Activated CD4-positive, alpha-beta memory T cell treated with anti-CD3 and anti-CD28 coated beads for 36 hours (primary cell): ENCODE measurements at regions of chr3 and their contacts with region 1.

Region 1: DNA sequence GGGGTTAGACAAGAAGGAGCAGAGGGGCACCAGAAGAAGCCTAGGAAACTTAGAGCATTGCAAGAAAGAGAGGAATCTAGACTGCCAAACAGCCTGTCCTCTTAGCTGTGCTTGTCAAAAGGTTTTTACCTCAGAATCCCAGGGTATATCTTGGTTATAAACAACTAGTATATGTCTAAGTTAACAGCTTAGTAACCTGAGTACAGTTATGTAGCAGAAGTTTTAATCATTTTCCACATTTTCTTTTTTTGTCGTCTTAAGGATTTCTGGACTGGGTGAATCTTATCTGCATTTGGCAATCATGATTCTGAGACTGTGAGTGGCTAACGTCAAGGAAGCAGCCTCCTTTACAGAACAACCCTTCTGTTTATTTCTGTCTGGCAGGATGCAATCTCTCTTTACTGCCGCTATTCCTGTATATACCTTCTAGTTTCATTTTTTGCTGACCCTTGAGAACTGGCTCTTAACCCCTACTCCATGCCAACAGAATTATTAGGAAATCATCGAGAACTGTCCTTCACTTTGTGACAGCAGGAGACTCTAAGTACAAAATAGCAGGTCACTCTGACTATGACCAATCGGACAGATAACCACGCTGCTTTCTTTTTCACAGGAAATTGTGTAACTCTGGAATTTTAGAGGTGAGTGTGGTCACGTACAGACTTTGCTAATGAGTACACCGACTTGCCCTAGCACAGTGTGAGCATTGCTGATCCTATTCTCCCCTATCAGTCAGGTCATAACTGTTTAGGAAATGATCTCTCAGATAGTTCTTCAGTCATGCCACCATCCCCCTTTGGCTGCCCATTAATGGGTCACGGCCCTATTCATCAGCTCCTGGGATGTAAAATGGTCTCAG is 3.3 kb upstream of the CP start:
- DNase-seq: peak; percentile 46
- H3K4me3 Mint-ChIP-seq: peak overlapping the region; percentile 64
- H3K27ac Mint-ChIP-seq: peak overlapping the region; percentile 48
- H3K4me1 Mint-ChIP-seq: peaks cover 21% of the 10 kb centered on the region
- H3K27me3 Mint-ChIP-seq: peaks cover 3% of the 10 kb centered on the region

Region 2: GRCh38 chr3:149086232-149086988 is 138.6 kb before region 1 on chr3 and contains the start of gene HLTF:
- CTCF ChIA-PET with region 1: no interaction called
- POLR2A ChIA-PET with region 1: no interaction called
- intact Hi-C with region 1: loop called (anchors 5 kb)
- DNase-seq: peak; percentile 93
- H3K4me3 Mint-ChIP-seq: peak within 1 kb of the TSS; percentile 95
- H3K27ac Mint-ChIP-seq: peak within 1 kb of the TSS; percentile 56
- H3K4me1 Mint-ChIP-seq: peaks cover 16% of the 10 kb centered on the region
- H3K27me3 Mint-ChIP-seq: no peaks in the 10 kb centered on the region
- total RNA-seq, gene HLTF: 22.3 to 25.1 TPM

Region 3: DNA sequence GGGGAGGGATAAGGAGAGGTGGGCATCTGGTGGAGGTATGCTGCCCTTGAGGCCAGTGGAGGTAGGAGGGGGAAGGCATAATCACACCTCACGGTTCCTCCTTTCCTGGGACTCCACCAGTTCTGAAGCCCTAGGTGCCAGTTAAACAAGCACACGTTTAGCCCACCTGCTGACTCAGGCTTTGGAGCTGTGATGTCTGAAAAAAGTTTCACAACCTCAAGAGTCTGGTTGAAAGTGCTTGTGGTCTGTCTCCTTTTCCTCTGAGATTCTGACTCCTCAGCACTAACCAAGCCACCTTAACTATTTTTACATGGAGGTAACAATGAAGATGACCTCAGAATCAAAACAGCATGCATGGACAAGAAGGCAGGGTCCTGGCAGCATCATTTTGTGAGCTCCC is 72.5 kb before region 1 on chr3:
- CTCF ChIA-PET with region 1: no interaction called
- POLR2A ChIA-PET with region 1: no interaction called
- intact Hi-C with region 1: loop called (anchors 1 kb)
- DNase-seq: peak; percentile 33
- H3K4me3 Mint-ChIP-seq: no peak overlapping the region
- H3K27ac Mint-ChIP-seq: no peak overlapping the region
- H3K4me1 Mint-ChIP-seq: peaks cover 13% of the 10 kb centered on the region
- H3K27me3 Mint-ChIP-seq: no peaks in the 10 kb centered on the region

Region 4: DNA sequence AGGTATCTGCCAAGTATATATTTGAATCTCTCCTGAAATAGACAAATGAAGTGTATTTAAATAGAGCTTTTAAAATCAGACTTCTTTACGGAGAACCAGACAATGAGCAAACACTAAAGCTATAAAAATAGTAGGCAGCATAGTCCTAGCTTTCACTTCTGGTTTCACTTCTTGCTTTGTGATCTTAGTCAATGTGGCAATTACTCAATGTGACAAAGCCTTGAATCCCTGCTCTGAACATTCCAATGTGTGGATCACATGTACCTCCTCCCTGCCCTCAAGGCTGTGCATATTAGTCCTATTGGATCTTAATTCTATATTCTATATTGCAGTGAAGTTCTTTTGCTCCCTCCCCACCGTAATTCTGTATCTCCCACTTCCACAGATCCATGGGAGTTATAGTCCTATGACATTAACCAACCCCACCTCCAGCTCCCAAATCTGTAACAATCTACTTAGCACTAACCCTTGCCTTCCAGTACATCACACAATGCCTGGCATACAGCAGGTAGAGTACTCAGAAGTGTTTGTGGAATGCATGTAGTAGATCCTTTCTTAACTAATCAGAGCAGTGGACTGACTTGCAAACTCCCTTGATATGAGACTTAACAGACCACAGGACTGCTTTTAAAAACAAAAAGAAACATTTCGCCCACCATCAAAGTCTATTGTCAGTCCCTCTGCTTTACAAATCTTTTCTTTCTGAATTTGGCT is 20.9 kb after region 1 on chr3:
- CTCF ChIA-PET with region 1: no interaction called
- POLR2A ChIA-PET with region 1: no interaction called
- intact Hi-C with region 1: no loop called
- DNase-seq: no peak
- H3K4me3 Mint-ChIP-seq: no peak overlapping the region
- H3K27ac Mint-ChIP-seq: no peak overlapping the region
- H3K4me1 Mint-ChIP-seq: peaks cover 8% of the 10 kb centered on the region
- H3K27me3 Mint-ChIP-seq: peaks cover 2% of the 10 kb centered on the region